ENCODE measurements at regions of chr18 and their contacts with region 1.

Region 1: DNA sequence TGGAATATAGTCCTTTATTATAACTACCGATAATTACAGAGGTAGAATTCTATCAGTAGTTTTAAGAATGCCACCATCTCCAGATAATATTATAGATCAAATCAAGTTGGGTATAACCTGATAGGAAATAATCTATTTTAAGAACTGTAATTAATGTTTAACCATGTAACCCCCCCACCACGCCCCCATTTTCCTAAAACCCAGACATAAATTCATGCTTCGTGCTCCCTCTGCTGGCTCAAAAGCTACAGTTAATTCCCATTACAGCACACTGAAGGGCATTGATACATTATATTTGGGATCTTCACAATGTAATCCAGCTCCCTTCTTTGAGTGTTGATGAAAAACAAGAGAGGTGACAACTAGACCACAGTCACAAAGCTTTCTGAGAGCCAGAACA is 228.0 kb upstream of the SMAD7 start:
- DNase-seq: peak; percentile 12
- ATAC-seq: no peak
- H3K4me3 ChIP-seq: no peak overlapping the region
- H3K27ac ChIP-seq: no peak overlapping the region
- H3K4me1 ChIP-seq: peaks cover 19% of the 10 kb centered on the region
- H3K27me3 ChIP-seq: no peaks in the 10 kb centered on the region
- CTCF ChIP-seq: peak; percentile 64

Region 2: GRCh38 chr18:48777026-48777743 is 401.6 kb before region 1 on chr18:
- CTCF ChIA-PET with region 1: interaction called, 4 read pairs
- POLR2A ChIA-PET with region 1: no interaction called
- intact Hi-C with region 1: loop called (anchors 5 kb)
- DNase-seq: peak; percentile 30
- ATAC-seq: peak; percentile 87
- H3K4me3 ChIP-seq: no peak overlapping the region
- H3K27ac ChIP-seq: no peak overlapping the region
- H3K4me1 ChIP-seq: no peaks in the 10 kb centered on the region
- H3K27me3 ChIP-seq: no peaks in the 10 kb centered on the region
- CTCF ChIP-seq: peak; percentile 67

Region 3: GRCh38 chr18:49094979-49095632 is 83.6 kb before region 1 on chr18:
- CTCF ChIA-PET with region 1: no interaction called
- POLR2A ChIA-PET with region 1: no interaction called
- intact Hi-C with region 1: loop called (anchors 10 kb)
- DNase-seq: peak; percentile 43
- ATAC-seq: peak; percentile 59
- H3K4me3 ChIP-seq: no peak overlapping the region
- H3K27ac ChIP-seq: no peak overlapping the region
- H3K4me1 ChIP-seq: peaks cover 22% of the 10 kb centered on the region
- H3K27me3 ChIP-seq: no peaks in the 10 kb centered on the region
- CTCF ChIP-seq: no peak

Region 4: DNA sequence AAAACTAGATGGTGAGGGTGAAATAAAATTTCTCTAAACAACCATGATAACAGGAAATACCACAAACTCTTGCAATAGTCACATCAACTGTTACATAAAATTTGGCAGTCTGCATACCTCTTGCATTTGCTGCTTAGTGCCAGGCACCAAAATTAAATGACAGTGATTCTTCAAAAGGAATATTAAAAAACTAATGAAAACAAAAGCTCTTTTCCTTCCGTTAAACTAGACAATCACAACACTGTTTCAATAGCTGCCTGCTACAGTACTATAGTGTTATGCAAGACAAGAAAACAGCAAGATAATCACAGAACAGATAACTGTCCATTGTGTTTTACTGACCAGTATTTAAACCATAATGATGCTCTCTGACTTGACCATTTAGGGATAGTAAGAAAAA is 11.0 kb after region 1 on chr18:
- CTCF ChIA-PET with region 1: no interaction called
- POLR2A ChIA-PET with region 1: interaction called, 14 read pairs
- intact Hi-C with region 1: no loop called
- DNase-seq: no peak
- ATAC-seq: no peak
- H3K4me3 ChIP-seq: no peak overlapping the region
- H3K27ac ChIP-seq: no peak overlapping the region
- H3K4me1 ChIP-seq: peaks cover 4% of the 10 kb centered on the region; the same call in 1 of the 2 replicates
- H3K27me3 ChIP-seq: no peaks in the 10 kb centered on the region
- CTCF ChIP-seq: no peak